ENCODE measurements at regions of chr17 and their contacts with region 1.

Region 1: DNA sequence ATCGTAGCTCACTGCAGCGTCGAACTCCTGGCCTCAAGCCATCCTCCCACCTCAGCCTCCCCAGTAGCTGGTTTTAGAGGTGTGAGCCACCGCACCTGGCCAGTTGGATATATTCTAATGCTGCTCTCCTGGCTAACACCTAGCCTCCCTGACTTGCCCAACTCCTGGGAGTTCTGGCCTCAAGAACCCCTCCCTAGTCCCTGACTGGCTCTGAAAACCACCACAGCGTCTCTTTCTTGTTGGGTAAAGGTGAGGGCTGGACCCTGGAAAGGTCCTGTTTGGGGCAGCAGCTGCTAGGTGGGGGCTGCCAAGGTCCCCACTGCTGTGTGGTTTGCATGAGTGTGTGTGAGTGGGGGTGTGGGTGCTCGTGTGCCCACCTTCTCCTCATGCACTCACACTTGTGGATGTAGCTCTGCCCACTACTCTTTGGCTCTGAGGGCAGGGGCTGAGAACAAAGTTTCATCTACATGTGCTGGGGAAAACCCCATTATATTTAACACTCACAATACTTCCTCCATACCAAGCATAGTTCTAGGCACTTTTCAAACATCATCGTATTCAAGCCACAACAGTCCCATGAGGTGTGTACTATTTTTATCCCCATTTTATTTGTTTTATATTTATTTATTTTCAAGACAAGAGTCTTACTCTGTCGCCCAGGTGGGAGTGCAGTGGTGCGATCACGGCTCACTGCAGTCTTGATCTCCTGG is 7.1 kb upstream of the SPNS3 start:
- DNase-seq: peak; percentile 29
- H3K4me3 Mint-ChIP-seq: no peak overlapping the region
- H3K27ac Mint-ChIP-seq: peak overlapping the region; percentile 52
- H3K4me1 Mint-ChIP-seq: peaks cover 2% of the 10 kb centered on the region
- H3K27me3 Mint-ChIP-seq: no peaks in the 10 kb centered on the region
- CTCF ChIP-seq: no peak

Region 2: GRCh38 chr17:4480929-4481898 is 54.6 kb after region 1 on chr17:
- CTCF ChIA-PET with region 1: no interaction called
- intact Hi-C with region 1: loop called (anchors 5 kb)
- DNase-seq: no peak
- H3K4me3 Mint-ChIP-seq: peak overlapping the region; percentile 36
- H3K27ac Mint-ChIP-seq: peak overlapping the region; percentile 92
- H3K4me1 Mint-ChIP-seq: peaks cover 56% of the 10 kb centered on the region
- H3K27me3 Mint-ChIP-seq: no peaks in the 10 kb centered on the region
- CTCF ChIP-seq: no peak